Sigmoid colon (tissue), 7 donors: ENCODE measurements at regions of chr17 and their contacts with region 1.

Region 1: GRCh38 chr17:16353317-16354174 is at the start of gene CENPV:
- DNase-seq: peak; percentile 63
- H3K4me3 ChIP-seq: peak within 1 kb of the TSS; percentile 57 to 65 (median 60)
- H3K27ac ChIP-seq: peak within 1 kb of the TSS; percentile 42 to 68 (median 66)
- H3K4me1 ChIP-seq: peaks cover 0 to 14% (median 10%) of the 10 kb centered on the region in 4 donors
- H3K27me3 ChIP-seq: no peaks in the 10 kb centered on the region
- CTCF ChIP-seq: no peak
- EP300 ChIP-seq: no peak
- POLR2A ChIP-seq: no peak
- total RNA-seq, gene CENPV: 12.8 to 23.8 (median 18.2) TPM

Region 2: GRCh38 chr17:16285957-16286640 is 67.4 kb before region 1 on chr17:
- intact Hi-C with region 1: loop called (anchors 5 kb)
- DNase-seq: peak; percentile 93
- H3K4me3 ChIP-seq: peak overlapping the region in 3 of 4 donors; percentile 1 to 15 (median 8)
- H3K27ac ChIP-seq: peak overlapping the region; percentile 78 to 88 (median 88)
- H3K4me1 ChIP-seq: peaks cover 0 to 33% (median 30%) of the 10 kb centered on the region in 4 donors
- H3K27me3 ChIP-seq: no peaks in the 10 kb centered on the region
- CTCF ChIP-seq: peak in 1 of 4 experiments; percentile 25
- EP300 ChIP-seq: peak in 1 of 4 donors; percentile 14
- POLR2A ChIP-seq: peak in 1 of 2 donors; percentile 76